H1 (cell line): ENCODE measurements at regions of chr18 and their contacts with region 1.

Region 1: DNA sequence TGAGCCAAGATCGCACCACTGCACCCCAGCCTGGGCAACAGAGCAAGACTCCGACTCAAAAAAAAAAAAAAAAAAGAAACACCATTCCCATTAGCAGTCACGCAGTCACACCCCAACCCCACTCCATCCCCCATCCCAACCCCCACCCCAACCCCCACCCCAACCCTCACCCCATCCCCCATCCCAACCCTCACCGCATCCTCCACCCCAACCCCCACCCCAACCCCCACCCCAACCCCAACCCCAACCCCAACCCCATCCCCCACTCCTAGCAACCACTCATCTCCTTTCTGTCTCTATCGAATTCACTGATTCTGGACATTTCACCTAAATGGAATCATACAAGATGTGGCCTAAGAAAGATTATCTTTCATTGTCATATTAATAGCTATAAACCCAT is 25.9 kb upstream of the ATP9B start:
- DNase-seq: no peak
- H3K4me3 ChIP-seq: no peak overlapping the region
- H3K27ac ChIP-seq: no peak overlapping the region
- H3K4me1 ChIP-seq: no peaks in the 10 kb centered on the region
- H3K27me3 ChIP-seq: no peaks in the 10 kb centered on the region
- CTCF ChIP-seq: no peak
- EP300 ChIP-seq: no peak
- POLR2A ChIP-seq: no peak
- RAD21 ChIP-seq: no peak

Region 2: DNA sequence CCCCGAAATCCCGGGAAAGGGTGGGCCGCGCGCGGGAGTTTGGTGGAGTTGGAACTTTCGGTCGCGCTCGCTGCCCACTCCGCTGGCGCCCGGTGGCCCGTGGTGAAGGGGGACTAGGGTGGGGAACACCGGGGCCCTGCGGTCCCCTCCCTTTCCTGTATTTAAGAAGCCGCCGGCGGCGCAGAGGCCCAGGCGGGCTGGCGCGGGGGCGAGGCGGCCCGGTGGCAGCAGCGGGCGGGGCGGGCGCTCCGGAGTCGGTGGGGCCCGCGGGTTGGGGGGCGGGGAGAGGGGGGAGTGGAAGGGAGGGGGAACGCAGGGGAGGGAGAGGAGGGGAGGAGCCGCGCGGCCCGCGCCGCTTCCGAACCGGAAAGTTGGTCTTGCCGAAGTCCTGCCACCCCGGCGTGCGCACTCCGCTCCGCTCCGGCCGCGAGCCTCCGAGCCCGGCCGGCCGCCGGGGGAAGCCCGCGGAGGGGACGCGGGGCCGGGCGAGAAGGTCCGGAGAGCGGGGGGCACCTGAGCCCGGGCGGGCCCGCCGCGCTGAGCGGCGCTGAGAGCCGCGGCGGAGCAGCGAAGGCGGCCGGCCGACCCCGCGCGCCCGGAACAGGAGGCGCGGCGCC is 64.1 kb before region 1 on chr18:
- CTCF ChIA-PET with region 1: no interaction called
- POLR2A ChIA-PET with region 1: no interaction called
- DNase-seq: peak in 1 of 2 experiments; percentile 77
- H3K4me3 ChIP-seq: peak overlapping the region; percentile 40 to 93 (median 55)
- H3K27ac ChIP-seq: no peak overlapping the region
- H3K4me1 ChIP-seq: peaks cover 9 to 27% (median 23%) of the 10 kb centered on the region in 4 experiments
- H3K27me3 ChIP-seq: peaks cover 34 to 49% (median 44%) of the 10 kb centered on the region in 4 experiments
- CTCF ChIP-seq: no peak
- EP300 ChIP-seq: no peak
- POLR2A ChIP-seq: no peak
- RAD21 ChIP-seq: no peak

Region 3: GRCh38 chr18:79026491-79026890 is 16.8 kb before region 1 on chr18:
- CTCF ChIA-PET with region 1: interaction called, 12 read pairs
- POLR2A ChIA-PET with region 1: no interaction called
- DNase-seq: peak in 1 of 2 experiments; percentile 65
- H3K4me3 ChIP-seq: no peak overlapping the region
- H3K27ac ChIP-seq: no peak overlapping the region
- H3K4me1 ChIP-seq: peaks cover 0 to 5% (median 3%) of the 10 kb centered on the region in 4 experiments; a peak in 3 of 7 replicates
- H3K27me3 ChIP-seq: no peaks in the 10 kb centered on the region
- CTCF ChIP-seq: peak; percentile 34 to 63 (median 47); a peak in 3 of 4 replicates
- EP300 ChIP-seq: no peak; a peak in 1 of 3 replicates
- POLR2A ChIP-seq: no peak
- RAD21 ChIP-seq: peak; percentile 13 to 38; a peak in 3 of 4 replicates